ENCODE measurements at regions of chr1 and their contacts with region 1.

Region 1: GRCh38 chr1:232012773-232013386 is 386.3 kb downstream of the DISC1 start:
- DNase-seq: peak; percentile 23 to 85
- ATAC-seq: peak; percentile 87 to 96 (median 94)
- H3K4me3 ChIP-seq: peak overlapping the region in 6 of 10 donors; percentile 17 to 37 (median 22)
- H3K27ac ChIP-seq: peak overlapping the region; percentile 1 to 81 (median 64)
- H3K4me1 ChIP-seq: peaks cover 4 to 41% (median 33%) of the 10 kb centered on the region in 9 donors
- H3K27me3 ChIP-seq: no peaks in the 10 kb centered on the region
- CTCF ChIP-seq: no peak

Region 2: GRCh38 chr1:231872461-231872910 is 140.4 kb before region 1 on chr1:
- intact Hi-C with region 1: loop called in 2 of 10 experiments (anchors 5 to 10 kb)
- DNase-seq: no peak
- ATAC-seq: no peak
- H3K4me3 ChIP-seq: no peak overlapping the region
- H3K27ac ChIP-seq: no peak overlapping the region
- H3K4me1 ChIP-seq: peaks cover under 1 to 20% (median 6%) of the 10 kb centered on the region in 9 donors
- H3K27me3 ChIP-seq: no peaks in the 10 kb centered on the region
- CTCF ChIP-seq: no peak

Region 3: DNA sequence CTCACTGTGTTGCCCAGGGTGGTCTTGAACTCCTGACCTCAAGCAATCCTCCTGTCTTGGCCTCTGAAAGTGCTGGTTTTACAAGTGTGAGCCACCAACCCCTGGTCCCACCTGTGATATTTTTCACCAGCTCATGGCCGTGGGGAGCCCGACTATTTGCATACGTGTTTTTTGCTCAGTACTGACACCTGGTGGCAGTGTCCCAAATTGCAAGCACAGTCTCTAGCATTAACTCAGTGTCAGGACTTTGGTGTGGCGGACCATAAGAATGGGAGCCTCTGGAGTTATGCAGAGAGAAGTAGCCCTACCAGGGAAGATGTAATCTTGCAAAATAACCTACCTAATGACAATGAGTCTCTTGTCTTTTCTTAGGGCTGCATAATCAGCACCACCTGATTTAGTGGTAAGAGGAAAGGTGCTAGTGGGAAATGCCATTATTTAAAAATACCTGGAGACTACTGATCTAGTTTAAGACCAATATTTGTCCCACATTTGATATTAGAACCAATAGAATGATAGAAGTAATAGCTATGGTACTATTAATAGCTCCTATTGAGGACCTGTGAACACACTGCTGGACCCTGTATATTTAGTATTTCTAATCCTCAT is 80.9 kb before region 1 on chr1:
- intact Hi-C with region 1: loop called in 1 of 10 experiments (anchors 5 kb)
- DNase-seq: no peak
- ATAC-seq: no peak
- H3K4me3 ChIP-seq: no peak overlapping the region
- H3K27ac ChIP-seq: no peak overlapping the region
- H3K4me1 ChIP-seq: peaks cover 15 to 82% (median 62%) of the 10 kb centered on the region in 9 donors
- H3K27me3 ChIP-seq: no peaks in the 10 kb centered on the region
- CTCF ChIP-seq: peak; percentile 11 to 58 (median 38)

Region 4: GRCh38 chr1:231986631-231987551 is 26.0 kb before region 1 on chr1:
- intact Hi-C with region 1: loop called in 1 of 10 experiments (anchors 2 kb)
- DNase-seq: peak in 1 of 2 donors; percentile 26
- ATAC-seq: peak in 4 of 8 donors; percentile 23 to 70 (median 53)
- H3K4me3 ChIP-seq: no peak overlapping the region
- H3K27ac ChIP-seq: peak overlapping the region in 3 of 10 donors; percentile 0 to 43 (median 16)
- H3K4me1 ChIP-seq: peaks cover 0 to 23% (median 10%) of the 10 kb centered on the region in 9 donors
- H3K27me3 ChIP-seq: no peaks in the 10 kb centered on the region
- CTCF ChIP-seq: no peak

Region 5: GRCh38 chr1:232271991-232272589 is 259.2 kb after region 1 on chr1:
- intact Hi-C with region 1: no loop called
- DNase-seq: no peak
- ATAC-seq: peak in 7 of 8 donors; percentile 19 to 71 (median 59)
- H3K4me3 ChIP-seq: no peak overlapping the region
- H3K27ac ChIP-seq: no peak overlapping the region
- H3K4me1 ChIP-seq: peaks cover 0 to 8% (median 0%) of the 10 kb centered on the region in 9 donors
- H3K27me3 ChIP-seq: no peaks in the 10 kb centered on the region
- CTCF ChIP-seq: no peak

Measured in heart right ventricle (tissue), 16 donors.